Activated T-helper 1 cell treated with anti-CD3 and anti-CD28 coated beads, Interleukin-12 subunit alpha, Interleukin-12 subunit beta, Interleukin-2, Interleukin-4 antibody, amounts not matched to agents 30 ng/mL and 10 ng/mL and 1 ng/mL, durations not matched to agents 14 hours and 24 hours and 36 hours (primary cell): ENCODE measurements at regions of chr1 and their contacts with region 1.

Region 1: DNA sequence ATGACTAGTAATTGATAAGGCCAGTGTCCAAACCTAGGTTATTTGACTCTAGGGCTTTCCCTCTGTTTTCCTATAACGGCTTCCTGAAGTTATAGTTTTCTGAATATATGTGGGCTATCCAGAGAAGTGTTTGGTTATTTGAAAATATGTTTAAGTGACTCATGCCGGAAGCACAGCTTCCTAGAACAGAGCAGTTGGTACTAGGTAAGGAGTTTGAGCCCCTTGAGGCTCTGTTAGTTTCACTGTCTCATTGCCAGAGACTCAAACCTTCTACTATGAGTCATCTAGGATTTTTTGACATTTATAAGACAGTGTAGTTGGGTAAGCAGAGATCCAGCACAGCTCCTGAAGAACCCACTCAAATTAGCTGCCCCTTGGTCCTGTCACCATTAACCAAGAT is 27.1 kb upstream of the LEPR start:
- DNase-seq: peak; percentile 30
- H3K4me3 Mint-ChIP-seq: peak overlapping the region; percentile 35
- H3K27ac Mint-ChIP-seq: peak overlapping the region; percentile 70
- H3K4me1 Mint-ChIP-seq: peaks cover 96% of the 10 kb centered on the region
- H3K27me3 Mint-ChIP-seq: no peaks in the 10 kb centered on the region

Region 2: GRCh38 chr1:65148548-65149350 is 244.6 kb before region 1 on chr1:
- intact Hi-C with region 1: loop called (anchors 10 kb)
- DNase-seq: peak; percentile 55
- H3K4me3 Mint-ChIP-seq: peak overlapping the region; percentile 94
- H3K27ac Mint-ChIP-seq: peak overlapping the region; percentile 90
- H3K4me1 Mint-ChIP-seq: peaks cover 52% of the 10 kb centered on the region
- H3K27me3 Mint-ChIP-seq: peaks cover 7% of the 10 kb centered on the region

Region 3: DNA sequence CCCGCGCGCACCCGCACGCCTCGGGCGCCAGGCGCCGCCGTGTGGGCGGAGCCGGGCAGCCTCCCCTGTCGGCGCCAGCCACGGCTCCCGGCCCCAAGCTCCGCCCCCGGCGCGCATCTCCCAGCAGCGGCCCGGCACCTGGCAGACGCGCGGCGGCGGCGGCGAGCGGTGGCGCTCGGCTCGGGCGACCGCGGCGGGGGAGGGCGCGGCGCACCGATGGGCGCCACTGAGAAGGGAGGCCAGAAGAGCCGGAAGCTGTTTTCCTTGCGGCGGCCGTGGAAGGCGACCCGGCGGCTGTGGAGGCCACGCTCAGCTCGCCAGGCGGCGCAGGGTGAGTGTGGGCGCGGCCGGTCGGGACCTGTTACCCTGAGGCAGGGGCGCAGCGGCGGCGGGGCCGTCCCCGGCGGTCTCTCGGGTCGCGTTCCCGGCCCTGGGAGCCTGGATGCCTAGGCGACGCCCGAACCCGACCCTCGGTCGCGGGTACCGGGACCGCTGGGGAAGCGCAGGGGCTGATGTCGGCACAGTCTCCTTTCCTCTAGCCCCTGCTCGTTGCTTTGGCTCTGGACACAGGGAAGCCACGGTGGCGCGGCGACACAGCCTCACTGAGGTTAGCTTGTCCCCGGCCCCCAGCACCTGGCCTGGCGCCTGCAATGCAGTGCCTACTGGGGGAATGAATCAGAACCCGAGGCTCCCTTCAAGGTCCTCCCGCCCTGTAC is 138.9 kb before region 1 on chr1:
- intact Hi-C with region 1: loop called (anchors 1 kb)
- DNase-seq: peak; percentile 83
- H3K4me3 Mint-ChIP-seq: peak overlapping the region; percentile 93
- H3K27ac Mint-ChIP-seq: peak overlapping the region; percentile 40
- H3K4me1 Mint-ChIP-seq: peaks cover 34% of the 10 kb centered on the region
- H3K27me3 Mint-ChIP-seq: peaks cover 23% of the 10 kb centered on the region

Region 4: GRCh38 chr1:65431111-65431705 is 37.9 kb after region 1 on chr1:
- intact Hi-C with region 1: loop called (anchors 5 kb)
- DNase-seq: no peak
- H3K4me3 Mint-ChIP-seq: no peak overlapping the region
- H3K27ac Mint-ChIP-seq: no peak overlapping the region
- H3K4me1 Mint-ChIP-seq: peaks cover 30% of the 10 kb centered on the region
- H3K27me3 Mint-ChIP-seq: no peaks in the 10 kb centered on the region

Region 5: GRCh38 chr1:66331657-66332547 is 938.6 kb after region 1 on chr1:
- intact Hi-C with region 1: loop called (anchors 10 kb)
- DNase-seq: peak; percentile 35
- H3K4me3 Mint-ChIP-seq: peak overlapping the region; percentile 98
- H3K27ac Mint-ChIP-seq: peak overlapping the region; percentile 95
- H3K4me1 Mint-ChIP-seq: peaks cover 60% of the 10 kb centered on the region
- H3K27me3 Mint-ChIP-seq: no peaks in the 10 kb centered on the region

Region 6: DNA sequence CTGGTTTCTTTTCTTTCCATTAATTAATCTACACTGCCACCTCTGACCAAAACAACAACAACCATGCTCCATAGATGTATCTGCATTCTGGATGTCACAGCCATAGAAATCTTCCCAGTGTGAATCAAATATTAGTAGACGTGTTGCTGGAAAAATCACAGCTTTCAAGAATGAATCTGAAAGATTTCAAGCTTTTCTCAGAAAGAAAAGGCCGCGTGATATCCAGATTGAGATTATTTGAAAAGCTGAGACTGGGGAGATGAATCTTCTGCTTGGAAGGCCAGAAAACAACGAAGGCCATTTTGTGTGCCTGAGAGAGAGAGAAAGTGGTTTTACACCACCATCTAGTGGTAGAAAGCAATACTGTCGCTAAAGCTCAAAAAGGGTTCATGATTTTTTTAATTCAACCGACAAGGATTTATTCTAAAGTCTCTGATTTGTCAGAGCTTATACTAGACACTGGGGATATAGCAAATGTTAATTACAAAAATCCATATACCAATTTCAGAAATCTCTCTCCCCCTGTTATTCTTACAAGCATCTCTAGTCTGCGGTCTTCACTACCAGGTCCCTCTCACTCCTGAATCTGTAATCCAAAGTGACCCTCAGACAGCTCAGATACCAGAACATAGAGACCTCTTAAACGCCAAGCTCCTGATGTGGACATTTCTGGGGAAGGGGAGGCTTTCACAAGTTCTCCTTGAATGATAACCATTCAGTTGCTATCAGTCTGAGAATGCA is 1053.1 kb after region 1 on chr1:
- intact Hi-C with region 1: loop called (anchors 10 kb)
- DNase-seq: peak; percentile 39
- H3K4me3 Mint-ChIP-seq: peak overlapping the region; percentile 56
- H3K27ac Mint-ChIP-seq: peak overlapping the region; percentile 95
- H3K4me1 Mint-ChIP-seq: peaks cover 32% of the 10 kb centered on the region
- H3K27me3 Mint-ChIP-seq: peaks cover 3% of the 10 kb centered on the region